CD14-positive monocyte (primary cell): ENCODE measurements at regions of chr1 and their contacts with region 1.

Region 1: GRCh38 chr1:244835276-244836134 is at the start of gene COX20:
- DNase-seq: peak; percentile 77 to 89 (median 77)
- H3K4me3 ChIP-seq: peak within 1 kb of the TSS; percentile 88 to 95 (median 95)
- H3K4me3 Mint-ChIP-seq: peak within 1 kb of the TSS; percentile 93
- H3K27ac ChIP-seq: peak within 1 kb of the TSS; percentile 93 to 95
- H3K27ac Mint-ChIP-seq: peak within 1 kb of the TSS; percentile 97 to 100 (median 99)
- H3K4me1 ChIP-seq: peaks cover 19 to 35% of the 10 kb centered on the region in 2 donors
- H3K4me1 Mint-ChIP-seq: peaks cover 41% of the 10 kb centered on the region
- H3K27me3 ChIP-seq: no peaks in the 10 kb centered on the region
- H3K27me3 Mint-ChIP-seq: no peaks in the 10 kb centered on the region
- CTCF ChIP-seq: no peak
- polyA plus RNA-seq, gene COX20: 15.8 to 21.6 (median 17.9) TPM

Region 2: GRCh38 chr1:244652699-244653466 is 182.6 kb before region 1 on chr1 and contains the start of gene DESI2:
- intact Hi-C with region 1: loop called in 1 of 2 experiments (anchors 10 kb)
- DNase-seq: peak; percentile 99 to 100 (median 99)
- H3K4me3 ChIP-seq: peak within 1 kb of the TSS; percentile 69 to 89 (median 80)
- H3K4me3 Mint-ChIP-seq: peak within 1 kb of the TSS; percentile 76 to 93
- H3K27ac ChIP-seq: peak within 1 kb of the TSS; percentile 66 to 89
- H3K27ac Mint-ChIP-seq: peak within 1 kb of the TSS; percentile 72 to 91 (median 82)
- H3K4me1 ChIP-seq: peaks cover 22 to 24% of the 10 kb centered on the region in 2 donors
- H3K4me1 Mint-ChIP-seq: peaks cover 17% of the 10 kb centered on the region
- H3K27me3 ChIP-seq: no peaks in the 10 kb centered on the region
- H3K27me3 Mint-ChIP-seq: peaks cover 0 to 4% (median under 1%) of the 10 kb centered on the region in 3 donors
- CTCF ChIP-seq: peak; percentile 68
- polyA plus RNA-seq, gene DESI2: 10.5 to 12.0 (median 11.2) TPM

Region 3: DNA sequence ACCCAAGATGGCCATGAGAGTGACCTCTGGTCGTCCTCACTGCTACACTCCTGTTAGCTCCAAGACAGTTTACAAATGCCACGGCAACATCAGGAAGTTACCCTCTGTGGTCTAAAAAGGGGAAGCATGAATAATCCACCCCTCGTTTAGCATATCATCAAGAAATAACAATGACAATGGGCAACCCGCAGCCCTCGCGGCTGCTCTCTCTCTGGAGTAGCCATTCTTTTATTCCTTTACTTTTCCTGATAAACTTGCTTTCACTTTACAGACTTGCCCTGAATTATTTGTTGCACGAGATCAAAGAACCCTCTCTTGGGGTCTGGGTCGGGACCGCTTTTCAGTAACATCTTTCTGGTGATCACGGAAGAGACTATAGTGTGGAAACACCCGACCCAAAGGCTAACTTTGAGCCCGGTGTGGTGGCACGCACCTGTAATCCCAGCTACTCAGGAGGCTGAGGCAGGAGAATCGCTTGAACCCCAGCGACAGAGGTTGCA is 19.9 kb before region 1 on chr1:
- intact Hi-C with region 1: loop called in 1 of 2 experiments (anchors 2 kb)
- DNase-seq: peak; percentile 86 to 90 (median 89)
- H3K4me3 ChIP-seq: peak overlapping the region; percentile 69 to 83 (median 73)
- H3K4me3 Mint-ChIP-seq: peak overlapping the region; percentile 84 to 93
- H3K27ac ChIP-seq: peak overlapping the region; percentile 87 to 100
- H3K27ac Mint-ChIP-seq: peak overlapping the region; percentile 94 to 98 (median 97)
- H3K4me1 ChIP-seq: peaks cover 19 to 26% of the 10 kb centered on the region in 2 donors
- H3K4me1 Mint-ChIP-seq: peaks cover 37% of the 10 kb centered on the region
- H3K27me3 ChIP-seq: no peaks in the 10 kb centered on the region
- H3K27me3 Mint-ChIP-seq: peaks cover 0 to 8% (median 2%) of the 10 kb centered on the region in 3 donors
- CTCF ChIP-seq: no peak